HEK293 (cell line): ENCODE measurements at regions of chr17 and their contacts with region 1.

Region 1: GRCh38 chr17:8745586-8746500 is 1.2 kb upstream of the CCDC42 start:
- H3K4me3 ChIP-seq: peak overlapping the region; percentile 60
- H3K27ac ChIP-seq: no peak overlapping the region
- H3K4me1 ChIP-seq: no peaks in the 10 kb centered on the region
- CTCF ChIP-seq: peak; percentile 90

Region 2: DNA sequence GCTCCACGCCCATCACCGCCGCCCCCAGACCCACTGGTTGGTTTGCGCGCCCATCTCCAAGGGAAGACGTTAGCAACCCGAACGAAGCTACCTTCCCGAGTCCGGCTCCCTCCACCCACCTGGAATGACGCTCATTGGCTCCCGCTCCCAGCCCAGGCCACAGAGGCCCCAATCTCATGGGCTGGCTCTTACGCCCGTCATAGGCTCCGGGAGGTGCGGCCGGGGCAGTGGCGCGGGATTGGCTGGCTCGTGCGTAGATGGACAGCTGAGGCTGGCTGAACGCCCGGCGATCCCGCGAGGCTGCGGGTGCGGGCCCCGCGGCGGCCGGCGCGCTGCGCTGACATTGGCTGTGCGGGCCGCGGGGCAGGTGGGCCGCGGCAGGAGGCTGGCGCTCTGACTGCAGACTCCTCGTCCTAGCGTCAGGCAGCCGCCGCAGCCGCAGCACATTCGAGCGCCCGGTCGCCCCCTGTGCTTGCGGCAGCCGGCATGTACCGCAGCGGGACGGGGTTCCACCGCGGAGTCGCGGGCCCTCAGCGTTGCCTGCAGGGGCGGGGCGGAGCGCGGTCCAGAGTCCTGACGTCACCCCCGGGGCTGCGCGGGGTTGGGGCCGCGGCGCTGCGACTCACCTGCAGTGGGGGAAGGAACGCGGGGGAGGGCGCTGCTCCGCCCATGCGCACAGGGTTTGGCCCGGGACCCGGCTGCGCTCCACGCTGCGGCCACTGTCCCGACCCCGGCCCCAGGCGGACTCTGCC is 114.9 kb before region 1 on chr17:
- CTCF ChIA-PET with region 1: no interaction called
- POLR2A ChIA-PET with region 1: interaction called, 11 read pairs
- H3K4me3 ChIP-seq: peak overlapping the region; percentile 92
- H3K27ac ChIP-seq: peak overlapping the region; percentile 90
- H3K4me1 ChIP-seq: peaks cover 22% of the 10 kb centered on the region
- CTCF ChIP-seq: peak; percentile 98

Region 3: GRCh38 chr17:8692913-8693727 is 52.7 kb before region 1 on chr17:
- CTCF ChIA-PET with region 1: no interaction called
- POLR2A ChIA-PET with region 1: no interaction called
- H3K4me3 ChIP-seq: no peak overlapping the region
- H3K27ac ChIP-seq: no peak overlapping the region
- H3K4me1 ChIP-seq: peaks cover 2% of the 10 kb centered on the region
- CTCF ChIP-seq: no peak